Posterior cingulate gyrus (tissue), 11 donors: ENCODE measurements at regions of chr10 and their contacts with region 1.

Region 1: GRCh38 chr10:78196964-78197363 is 163.3 kb downstream of the RPS24 start:
- DNase-seq: peak in 2 of 10 donors; percentile 2 to 9

Region 2: GRCh38 chr10:77943121-77943901 is 253.7 kb before region 1 on chr10:
- intact Hi-C with region 1: no loop called
- DNase-seq: no peak

Region 3: DNA sequence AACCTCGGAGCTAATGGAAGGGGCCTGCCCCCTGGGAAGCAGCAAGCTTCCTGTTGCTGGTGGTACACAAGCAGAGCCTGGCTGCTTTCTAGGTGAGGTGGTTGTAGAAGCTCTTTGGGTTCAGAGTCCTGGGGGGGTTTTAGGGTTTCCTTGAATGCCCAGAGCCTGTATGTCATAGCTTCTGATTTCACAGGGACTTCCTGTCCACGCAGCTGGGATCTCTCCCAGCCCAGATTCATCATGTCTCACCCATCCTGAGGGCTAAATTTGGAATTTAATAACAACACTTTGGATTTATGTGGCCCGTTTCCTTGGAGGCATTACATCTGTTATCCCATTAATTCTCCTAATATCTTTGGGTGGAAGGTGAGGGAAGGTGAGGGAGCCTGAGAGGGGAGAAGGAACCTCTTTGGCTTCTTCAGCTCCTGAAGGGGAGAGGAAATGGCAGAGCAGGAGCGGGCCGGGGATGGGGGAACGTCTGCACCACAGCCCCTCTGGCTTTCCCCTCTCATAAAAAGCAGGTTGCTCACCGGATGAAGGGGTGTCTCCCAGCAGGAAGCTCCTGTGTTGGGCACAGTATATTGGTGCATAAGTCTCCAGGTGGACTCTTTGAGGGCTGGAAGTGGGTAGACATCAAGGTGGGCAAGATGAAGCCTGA is 143.6 kb before region 1 on chr10:
- intact Hi-C with region 1: loop called (anchors 10 kb)
- DNase-seq: peak in 1 of 10 donors; percentile 39